ENCODE measurements at regions of chr17 and their contacts with region 1.

Region 1: GRCh38 chr17:50872710-50873424 is 6.7 kb upstream of the TOB1 start:
- DNase-seq: no peak
- ATAC-seq: no peak; a peak in 1 of 6 replicates
- H3K4me3 ChIP-seq: no peak overlapping the region
- H3K27ac ChIP-seq: peak overlapping the region in 1 of 2 experiments; percentile 19; a peak in 2 of 6 replicates
- H3K4me1 ChIP-seq: peaks cover 15% of the 10 kb centered on the region
- CTCF ChIP-seq: no peak
- EP300 ChIP-seq: no peak
- POLR2A ChIP-seq: no peak
- RAD21 ChIP-seq: no peak

Region 2: GRCh38 chr17:50768348-50768778 is 104.5 kb before region 1 on chr17:
- CTCF ChIA-PET with region 1: no interaction called
- POLR2A ChIA-PET with region 1: no interaction called
- DNase-seq: peak; percentile 38 to 86
- ATAC-seq: peak; percentile 51 to 70; a peak in 4 of 6 replicates
- H3K4me3 ChIP-seq: no peak overlapping the region
- H3K27ac ChIP-seq: peak overlapping the region; percentile 28 to 59; a peak in 5 of 6 replicates
- H3K4me1 ChIP-seq: peaks cover 28% of the 10 kb centered on the region
- CTCF ChIP-seq: no peak
- EP300 ChIP-seq: no peak
- POLR2A ChIP-seq: no peak
- RAD21 ChIP-seq: no peak

Region 3: DNA sequence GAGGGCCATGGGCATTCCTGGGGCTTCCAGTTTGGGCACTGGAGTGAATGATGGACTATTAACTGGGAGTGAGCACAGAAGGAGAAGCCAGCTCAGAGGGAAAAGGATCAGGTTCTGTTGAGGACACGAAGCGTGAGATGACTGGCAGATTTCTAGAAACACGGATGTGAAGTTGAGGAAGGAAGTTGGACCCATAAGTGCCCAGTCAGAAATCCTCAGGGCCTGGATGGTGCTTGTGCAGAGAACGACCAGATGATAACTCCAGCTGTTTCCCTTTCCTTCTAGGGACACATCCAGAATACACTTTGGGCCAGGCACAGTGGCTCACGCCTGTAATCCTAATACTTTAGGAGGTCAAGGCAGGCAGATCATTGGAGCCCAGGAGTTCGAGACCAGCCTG is 82.2 kb before region 1 on chr17:
- CTCF ChIA-PET with region 1: no interaction called
- POLR2A ChIA-PET with region 1: no interaction called
- DNase-seq: no peak
- ATAC-seq: no peak
- H3K4me3 ChIP-seq: no peak overlapping the region
- H3K27ac ChIP-seq: no peak overlapping the region
- H3K4me1 ChIP-seq: no peaks in the 10 kb centered on the region
- CTCF ChIP-seq: no peak
- EP300 ChIP-seq: no peak
- POLR2A ChIP-seq: no peak
- RAD21 ChIP-seq: no peak

Region 4: GRCh38 chr17:50883850-50884438 is 11.1 kb after region 1 on chr17:
- CTCF ChIA-PET with region 1: interaction called, 14 read pairs
- POLR2A ChIA-PET with region 1: interaction called, 133 read pairs
- DNase-seq: no peak
- ATAC-seq: peak; percentile 32 to 53; a peak in 3 of 6 replicates
- H3K4me3 ChIP-seq: no peak overlapping the region
- H3K27ac ChIP-seq: peak overlapping the region; percentile 59 to 68; a peak in 5 of 6 replicates
- H3K4me1 ChIP-seq: peaks cover 27% of the 10 kb centered on the region
- CTCF ChIP-seq: no peak
- EP300 ChIP-seq: no peak
- POLR2A ChIP-seq: no peak
- RAD21 ChIP-seq: no peak

Region 5: GRCh38 chr17:50944054-50944901 is 71.4 kb after region 1 on chr17:
- CTCF ChIA-PET with region 1: interaction called, 1,502 read pairs
- POLR2A ChIA-PET with region 1: interaction called, 648 read pairs
- DNase-seq: peak; percentile 94 to 97
- ATAC-seq: peak; percentile 79 to 83
- H3K4me3 ChIP-seq: peak overlapping the region; percentile 53
- H3K27ac ChIP-seq: peak overlapping the region; percentile 96 to 98
- H3K4me1 ChIP-seq: peaks cover 78% of the 10 kb centered on the region
- CTCF ChIP-seq: no peak
- EP300 ChIP-seq: peak; percentile 88 to 97; a peak in 3 of 5 replicates
- POLR2A ChIP-seq: peak; percentile 98
- RAD21 ChIP-seq: peak in 1 of 2 experiments; percentile 55; a peak in 1 of 5 replicates

Region 6: DNA sequence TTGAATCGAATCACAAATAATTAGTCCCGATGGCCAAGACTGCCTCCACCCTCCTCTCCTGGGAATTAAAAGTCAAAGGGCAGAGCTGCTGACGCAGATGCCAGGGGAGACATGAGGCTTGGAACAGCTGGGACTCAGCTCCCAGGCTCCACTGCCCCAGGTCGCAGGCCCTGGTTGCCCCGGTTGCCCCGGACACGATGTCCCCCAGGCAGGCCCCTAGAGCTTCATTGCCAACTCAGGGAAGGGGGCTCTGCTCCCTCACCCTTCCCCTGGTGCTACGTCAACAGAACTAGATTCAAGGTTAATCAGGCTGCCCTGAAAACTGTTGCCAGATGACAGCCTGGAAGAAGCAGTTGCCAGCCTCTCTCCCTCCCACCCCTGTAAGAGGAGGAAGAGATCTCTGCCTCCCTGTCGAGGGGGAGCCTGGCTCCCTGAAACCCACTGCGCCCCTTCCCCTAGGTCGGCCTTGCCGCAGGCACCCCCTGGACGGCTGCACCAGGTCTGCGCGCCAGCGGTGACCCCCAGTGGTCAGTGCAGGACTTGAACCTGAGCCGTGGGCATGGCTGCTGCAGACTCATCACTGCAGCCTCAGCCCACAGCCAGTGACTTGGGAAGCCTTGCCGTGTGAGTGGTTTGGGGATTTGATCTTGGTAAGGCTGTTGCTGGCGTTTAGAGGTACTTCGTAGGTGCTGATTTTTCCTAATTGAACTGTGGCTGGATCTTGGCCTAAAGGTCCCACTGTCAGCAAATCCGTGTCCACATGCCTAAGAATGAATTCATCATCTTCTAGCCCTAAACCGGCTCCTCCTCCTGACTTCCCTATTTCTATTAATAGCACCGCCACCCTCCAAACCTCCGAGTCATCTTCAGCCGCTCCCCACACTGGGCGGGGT is 77.4 kb after region 1 on chr17:
- CTCF ChIA-PET with region 1: interaction called, 1,502 read pairs
- POLR2A ChIA-PET with region 1: interaction called, 648 read pairs
- DNase-seq: peak; percentile 95 to 96
- ATAC-seq: peak; percentile 79 to 84
- H3K4me3 ChIP-seq: 0 out of 3 replicates have a peak overlapping the region, but pooled peaks have one; percentile 3
- H3K27ac ChIP-seq: peak overlapping the region; percentile 93 to 98
- H3K4me1 ChIP-seq: peaks cover 77% of the 10 kb centered on the region
- CTCF ChIP-seq: peak; percentile 99
- EP300 ChIP-seq: no peak
- POLR2A ChIP-seq: no peak
- RAD21 ChIP-seq: peak; percentile 100

Region 7: GRCh38 chr17:51015145-51015558 is 142.3 kb after region 1 on chr17:
- CTCF ChIA-PET with region 1: no interaction called
- POLR2A ChIA-PET with region 1: no interaction called
- DNase-seq: no peak
- ATAC-seq: no peak; a peak in 1 of 6 replicates
- H3K4me3 ChIP-seq: no peak overlapping the region
- H3K27ac ChIP-seq: no peak overlapping the region
- H3K4me1 ChIP-seq: no peaks in the 10 kb centered on the region
- CTCF ChIP-seq: no peak
- EP300 ChIP-seq: no peak
- POLR2A ChIP-seq: no peak
- RAD21 ChIP-seq: no peak

Region 8: DNA sequence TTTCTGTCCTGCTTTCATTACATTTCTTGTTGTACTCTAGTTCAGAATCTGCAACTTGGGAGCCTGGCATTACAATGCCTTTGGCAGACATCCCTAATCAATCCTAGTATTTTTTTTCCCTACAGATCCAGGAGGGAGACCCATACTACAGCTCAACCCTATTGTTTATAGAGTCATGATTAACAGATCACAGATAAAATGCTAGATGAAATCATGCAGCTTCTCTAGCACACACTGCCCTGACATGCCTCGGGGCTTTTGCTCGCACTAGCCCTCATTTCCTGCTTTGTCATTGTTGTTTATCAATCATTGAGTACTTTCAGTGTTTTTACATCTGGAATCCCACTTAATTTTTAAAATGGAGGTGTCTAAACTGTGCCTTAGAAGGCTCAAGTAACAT is 873.1 kb after region 1 on chr17:
- CTCF ChIA-PET with region 1: no interaction called
- POLR2A ChIA-PET with region 1: no interaction called
- DNase-seq: peak in 1 of 2 experiments; percentile 18
- ATAC-seq: no peak
- H3K4me3 ChIP-seq: no peak overlapping the region
- H3K27ac ChIP-seq: no peak overlapping the region
- H3K4me1 ChIP-seq: no peaks in the 10 kb centered on the region
- CTCF ChIP-seq: no peak
- EP300 ChIP-seq: no peak
- POLR2A ChIP-seq: no peak
- RAD21 ChIP-seq: no peak

Measured in A549 (cell line).